HepG2 (cell line): ENCODE measurements at regions of chrX and their contacts with region 1.

Region 1: GRCh38 chrX:11683057-11683456 is 17.3 kb upstream of the ARHGAP6 start:
- DNase-seq: no peak
- ATAC-seq: no peak
- H3K4me3 ChIP-seq: no peak overlapping the region
- H3K27ac ChIP-seq: no peak overlapping the region
- H3K4me1 ChIP-seq: no peaks in the 10 kb centered on the region
- H3K27me3 ChIP-seq: no peaks in the 10 kb centered on the region
- CTCF ChIP-seq: no peak
- EP300 ChIP-seq: no peak
- POLR2A ChIP-seq: no peak
- RAD21 ChIP-seq: no peak

Region 2: DNA sequence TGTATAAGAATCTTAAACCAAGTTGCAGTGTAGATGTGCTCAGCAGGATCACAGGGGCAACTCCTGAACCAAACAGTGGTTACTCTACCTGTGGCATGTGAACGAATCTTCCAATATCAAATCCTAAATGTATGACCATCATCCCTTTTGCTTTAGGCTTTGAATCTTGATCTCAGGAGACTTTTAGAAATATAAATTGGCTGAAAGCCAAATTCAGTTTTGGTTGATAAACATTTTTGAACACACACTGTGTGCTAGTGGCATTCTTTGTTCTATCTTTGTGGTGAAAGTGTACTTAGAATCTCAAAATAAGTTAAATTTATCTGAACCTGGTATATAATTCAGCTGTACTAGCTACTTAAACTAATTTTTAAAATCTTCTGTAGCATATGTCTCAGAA is 12.7 kb before region 1 on chrX:
- CTCF ChIA-PET with region 1: no interaction called
- POLR2A ChIA-PET with region 1: no interaction called
- in situ Hi-C with region 1: no loop called
- intact Hi-C with region 1: loop called (anchors 1 kb)
- DNase-seq: no peak
- ATAC-seq: no peak
- H3K4me3 ChIP-seq: no peak overlapping the region
- H3K27ac ChIP-seq: no peak overlapping the region
- H3K4me1 ChIP-seq: no peaks in the 10 kb centered on the region
- H3K27me3 ChIP-seq: no peaks in the 10 kb centered on the region; a peak in 1 of 5 replicates
- CTCF ChIP-seq: no peak
- EP300 ChIP-seq: no peak
- POLR2A ChIP-seq: no peak
- RAD21 ChIP-seq: no peak